Testis (tissue), 5 donors: ENCODE measurements at regions of chr18 and their contacts with region 1.

Region 1: DNA sequence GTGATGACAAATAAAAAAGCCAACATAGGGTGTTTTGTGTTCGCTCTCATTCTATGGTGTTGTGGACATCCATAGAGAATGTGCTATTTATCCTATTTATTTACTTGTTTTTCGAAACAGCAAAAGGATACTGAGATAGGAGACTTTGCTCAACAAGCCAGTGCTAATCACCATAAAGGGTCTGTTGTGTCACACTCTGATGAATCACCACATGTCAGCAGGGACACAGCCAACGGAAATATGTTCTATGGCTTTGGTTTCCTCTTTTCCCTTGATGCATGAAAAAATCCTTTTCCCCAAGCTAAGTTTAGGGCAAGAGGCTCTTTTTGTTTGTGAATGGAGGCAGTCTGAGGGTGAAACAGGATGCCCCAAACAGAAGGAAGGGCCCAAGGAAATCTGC is 154.3 kb downstream of the RNF152 start:
- DNase-seq: no peak
- H3K4me3 ChIP-seq: no peak overlapping the region
- H3K27ac ChIP-seq: peak overlapping the region; percentile 67 to 90
- H3K4me1 ChIP-seq: peaks cover 23% of the 10 kb centered on the region
- H3K27me3 ChIP-seq: no peaks in the 10 kb centered on the region
- CTCF ChIP-seq: no peak
- POLR2A ChIP-seq: no peak

Region 2: GRCh38 chr18:61825386-61825785 is 86.9 kb after region 1 on chr18:
- intact Hi-C with region 1: no loop called
- DNase-seq: no peak
- H3K4me3 ChIP-seq: no peak overlapping the region
- H3K27ac ChIP-seq: no peak overlapping the region
- H3K4me1 ChIP-seq: no peaks in the 10 kb centered on the region
- H3K27me3 ChIP-seq: no peaks in the 10 kb centered on the region
- CTCF ChIP-seq: no peak
- POLR2A ChIP-seq: no peak

Region 3: DNA sequence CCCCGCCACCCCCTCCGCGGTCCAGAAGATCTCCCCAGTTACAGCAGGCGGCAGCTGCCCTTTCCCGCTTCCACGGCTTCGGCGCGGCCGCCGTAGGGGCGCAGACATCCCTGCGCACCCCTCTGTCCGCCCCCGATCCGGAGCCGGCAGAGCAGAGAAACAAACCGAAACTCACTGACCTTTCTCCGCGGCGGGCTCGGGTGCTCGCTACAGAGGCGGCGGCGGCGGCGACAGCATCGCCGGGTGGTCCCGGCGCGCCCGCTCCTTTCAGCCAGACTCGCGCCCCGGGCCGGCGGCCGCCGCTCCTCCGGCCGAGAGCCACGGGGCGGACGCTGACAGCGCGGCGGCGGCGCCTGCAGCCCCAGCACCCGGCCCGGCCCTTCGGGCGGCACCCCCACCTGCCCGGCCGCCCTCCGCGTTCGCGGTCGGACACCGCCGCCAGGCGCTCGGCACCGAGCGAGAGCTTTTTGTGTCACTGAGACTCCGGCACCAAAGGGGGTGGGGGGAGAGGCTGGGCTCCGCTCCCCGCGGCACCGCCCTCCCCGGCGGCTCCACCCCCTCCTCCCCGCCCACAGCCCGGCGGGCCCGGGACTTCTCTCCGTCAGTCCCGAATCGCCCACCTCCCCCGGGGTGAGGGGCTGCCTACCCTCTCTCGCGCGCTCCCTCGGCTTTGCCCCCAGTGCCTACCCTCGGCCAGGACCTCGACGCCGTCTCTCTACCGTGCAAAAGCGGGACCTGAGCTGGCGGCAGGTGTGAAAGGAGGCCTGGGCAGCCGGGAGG is 155.7 kb after region 1 on chr18:
- intact Hi-C with region 1: loop called (anchors 10 kb)
- DNase-seq: peak; percentile 85
- H3K4me3 ChIP-seq: peak overlapping the region; percentile 91 to 97
- H3K27ac ChIP-seq: peak overlapping the region; percentile 91 to 95
- H3K4me1 ChIP-seq: peaks cover 3% of the 10 kb centered on the region
- H3K27me3 ChIP-seq: no peaks in the 10 kb centered on the region
- CTCF ChIP-seq: peak in 2 of 3 experiments; percentile 21 to 45
- POLR2A ChIP-seq: no peak